ENCODE measurements at regions of chr11 and their contacts with region 1.

Region 1: GRCh38 chr11:75248690-75249268 is 8.2 kb downstream of the TPBGL start:
- DNase-seq: peak; percentile 90
- CTCF ChIP-seq: peak; percentile 100

Region 2: DNA sequence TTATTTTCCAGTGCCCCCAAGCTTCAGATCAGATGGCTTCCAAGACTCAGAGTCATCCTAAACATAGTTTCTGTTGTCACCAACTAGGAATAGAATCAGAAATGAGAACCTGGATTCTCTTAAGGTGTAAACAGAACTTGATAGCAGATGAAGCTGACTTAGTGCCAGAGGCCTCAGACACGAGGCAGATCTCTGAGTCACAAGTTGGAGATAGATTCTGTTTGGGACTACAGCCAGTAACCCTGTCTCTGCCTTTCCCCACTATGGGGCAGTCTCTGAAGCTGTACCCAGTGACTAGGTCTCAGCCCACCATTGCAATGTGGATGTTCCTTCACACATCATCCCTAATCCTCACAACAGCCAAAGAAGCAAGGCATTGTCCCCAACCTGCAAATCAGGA is 234.7 kb before region 1 on chr11:
- CTCF ChIA-PET with region 1: interaction called, 11 read pairs
- POLR2A ChIA-PET with region 1: no interaction called
- DNase-seq: no peak
- CTCF ChIP-seq: no peak

Region 3: DNA sequence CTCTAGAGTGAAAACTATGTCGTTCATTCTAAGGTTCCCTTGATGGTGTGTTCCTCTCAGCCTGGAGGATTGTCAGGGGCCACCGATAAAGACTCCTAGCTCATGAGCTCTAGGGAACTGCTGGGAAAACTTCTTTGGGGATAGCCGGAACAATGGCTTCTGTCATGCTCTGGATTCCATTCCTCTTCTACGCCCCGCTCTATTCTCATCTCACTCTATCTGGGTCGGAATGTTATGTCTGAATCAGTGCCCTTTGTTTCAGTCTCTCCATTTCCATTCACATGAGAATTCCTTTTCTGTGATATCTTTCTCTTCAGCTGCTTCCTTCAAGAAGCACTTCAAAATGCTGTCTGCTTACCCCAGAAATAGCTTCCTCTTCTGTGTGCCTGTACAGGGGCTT is 114.8 kb before region 1 on chr11:
- CTCF ChIA-PET with region 1: interaction called, 496 read pairs
- POLR2A ChIA-PET with region 1: no interaction called
- DNase-seq: no peak
- CTCF ChIP-seq: no peak

Region 4: DNA sequence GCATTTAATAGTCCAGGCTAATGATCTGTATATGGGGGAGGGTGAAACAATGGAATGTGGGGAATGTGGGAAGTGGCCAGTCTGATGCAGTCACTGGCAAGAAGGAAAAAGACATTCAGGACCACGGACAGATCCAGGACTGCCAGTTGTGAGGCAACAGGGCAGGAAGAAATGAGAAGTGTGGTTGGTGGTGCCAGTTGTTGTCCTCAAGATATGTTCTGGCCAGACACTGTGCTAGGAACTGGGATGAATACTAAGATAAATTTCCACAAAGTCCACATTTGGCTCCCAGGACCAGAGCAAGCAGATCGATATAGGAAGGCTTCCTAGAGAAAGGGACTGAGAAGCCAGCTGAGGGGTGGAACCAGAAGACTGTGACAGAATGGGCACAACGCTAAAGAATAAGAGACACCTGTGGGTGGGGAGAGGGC is 15.0 kb before region 1 on chr11:
- CTCF ChIA-PET with region 1: interaction called, 52 read pairs
- POLR2A ChIA-PET with region 1: no interaction called
- DNase-seq: no peak
- CTCF ChIP-seq: no peak

Region 5: DNA sequence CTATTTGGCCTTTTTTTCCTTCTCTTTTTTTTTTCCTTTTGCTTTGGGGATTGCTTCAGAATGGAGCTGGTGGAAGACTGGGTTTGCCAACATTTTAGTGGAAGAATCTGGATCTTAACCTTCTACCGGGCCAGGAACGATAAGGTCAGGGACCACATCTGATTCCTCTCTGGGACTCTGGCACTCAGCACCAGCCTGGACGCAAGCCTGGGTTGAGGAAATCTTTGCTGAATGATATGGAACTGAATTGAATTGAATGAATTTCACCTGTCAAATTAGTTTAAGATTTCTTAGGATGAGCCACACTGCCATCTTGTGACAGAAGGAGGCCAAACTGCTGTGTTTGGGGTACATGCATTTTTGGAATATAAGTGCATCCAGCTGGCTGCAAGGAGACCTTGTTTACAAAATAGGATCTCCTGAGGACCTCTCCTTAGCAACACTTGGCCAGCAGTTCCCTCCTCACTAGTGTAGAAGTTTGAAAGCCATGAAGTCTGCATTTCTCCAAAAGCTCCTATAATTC is 22.2 kb after region 1 on chr11:
- CTCF ChIA-PET with region 1: interaction called, 17 read pairs
- POLR2A ChIA-PET with region 1: no interaction called
- DNase-seq: no peak
- CTCF ChIP-seq: peak; percentile 49

Region 6: DNA sequence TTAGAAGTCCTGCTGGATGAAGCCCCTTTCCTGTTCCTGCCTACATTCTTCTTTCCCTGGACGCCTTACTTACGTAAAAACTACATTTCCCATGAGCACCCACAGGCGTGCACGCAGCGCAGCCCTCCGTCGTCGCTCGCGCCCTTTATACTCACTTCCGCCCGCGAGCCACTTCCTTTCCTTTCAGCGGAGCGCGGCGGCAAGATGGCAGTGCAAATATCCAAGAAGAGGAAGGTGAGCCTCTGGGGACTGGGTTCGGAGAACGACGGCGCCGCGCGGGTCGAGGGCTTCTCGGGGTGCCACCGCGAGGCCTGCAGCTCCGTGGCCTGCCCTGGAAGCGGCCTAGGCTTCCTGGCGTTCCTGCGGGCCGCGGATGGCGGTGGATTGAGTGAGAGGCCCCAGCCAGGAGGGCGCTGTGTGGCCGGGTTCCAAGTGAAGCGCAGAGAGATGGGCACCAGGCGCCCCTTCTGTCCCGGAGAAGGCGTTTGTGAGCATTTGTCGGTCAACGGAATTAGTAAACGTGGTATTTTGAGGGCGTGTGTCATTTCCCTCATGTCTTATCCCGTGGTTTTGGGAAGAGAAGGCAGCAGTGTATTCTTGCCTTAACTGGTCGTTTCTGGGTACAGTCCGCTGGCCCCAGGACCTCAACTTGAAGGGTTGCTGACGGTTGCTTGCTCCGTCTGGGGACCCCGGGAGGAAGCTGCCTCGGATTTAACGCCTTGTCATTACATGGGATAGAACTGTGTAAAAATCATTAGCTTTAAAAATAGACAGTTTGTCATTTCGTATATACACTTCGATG is 150.8 kb after region 1 on chr11 and contains the start of gene RPS3:
- CTCF ChIA-PET with region 1: no interaction called
- POLR2A ChIA-PET with region 1: no interaction called
- DNase-seq: peak; percentile 93
- CTCF ChIP-seq: peak; percentile 13